ENCODE measurements at regions of chr2 and their contacts with region 1.

Region 1: GRCh38 chr2:206442833-206443734 is at the start of gene ADAM23:
- DNase-seq: peak; percentile 53 to 67
- ATAC-seq: peak; percentile 83 to 92 (median 88)
- H3K4me3 ChIP-seq: peak within 1 kb of the TSS; percentile 33 to 75 (median 66)
- H3K27ac ChIP-seq: peak within 1 kb of the TSS; percentile 53 to 91 (median 77)
- H3K4me1 ChIP-seq: peaks cover 3 to 46% (median 20%) of the 10 kb centered on the region in 9 donors
- H3K27me3 ChIP-seq: peaks cover 0 to 81% (median 30%) of the 10 kb centered on the region in 7 donors
- CTCF ChIP-seq: peak in 8 of 9 donors; percentile 16 to 52 (median 24)
- total RNA-seq, gene ADAM23: 51.0 to 101 (median 72.4) TPM

Region 2: DNA sequence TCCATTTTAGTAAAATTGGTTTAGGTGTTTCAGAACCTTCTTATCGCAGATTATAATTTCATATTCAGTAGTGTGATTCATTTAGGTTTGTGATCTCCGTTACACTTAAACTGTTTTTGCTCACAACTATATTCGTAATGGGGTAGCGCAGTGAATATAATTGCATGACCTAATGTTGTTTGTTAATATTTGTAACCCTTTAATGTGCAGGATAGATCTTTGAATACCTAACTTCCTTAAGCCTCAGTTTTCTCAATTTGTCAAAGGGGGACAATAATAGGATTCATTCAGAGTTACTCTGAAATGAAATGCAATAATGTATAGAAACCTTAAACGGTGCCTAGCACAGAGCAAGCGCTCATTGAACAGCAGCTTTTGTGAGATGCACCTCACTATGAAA is 169.2 kb before region 1 on chr2:
- intact Hi-C with region 1: no loop called
- DNase-seq: no peak
- ATAC-seq: no peak
- H3K4me3 ChIP-seq: peak overlapping the region in 9 of 10 donors; percentile 67 to 76 (median 70)
- H3K27ac ChIP-seq: peak overlapping the region in 5 of 10 donors; percentile 64 to 79 (median 77)
- H3K4me1 ChIP-seq: peaks cover 0 to 17% (median 5%) of the 10 kb centered on the region in 9 donors
- H3K27me3 ChIP-seq: peaks cover 0 to 100% (median 93%) of the 10 kb centered on the region in 7 donors
- CTCF ChIP-seq: no peak

Region 3: DNA sequence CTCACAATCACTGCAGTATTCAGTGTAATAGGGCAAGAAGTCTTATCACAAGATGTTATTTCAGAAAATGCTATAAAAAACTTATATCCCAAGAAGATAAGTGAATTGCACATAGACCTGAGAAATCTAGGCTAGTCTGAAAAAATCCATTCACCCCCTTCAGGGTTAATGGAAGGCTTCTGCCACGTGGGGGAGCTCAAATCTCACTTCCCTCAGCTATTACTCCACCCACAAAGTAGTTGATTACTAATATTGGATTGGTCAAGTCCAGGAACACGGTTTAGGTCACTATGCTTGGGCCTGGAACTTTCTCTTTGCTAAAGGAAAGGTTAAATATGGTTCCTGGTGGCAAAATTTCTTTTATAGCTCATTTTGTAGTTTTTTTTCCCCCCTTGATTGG is 51.0 kb before region 1 on chr2:
- intact Hi-C with region 1: loop called in 1 of 10 experiments (anchors 5 kb)
- DNase-seq: no peak
- ATAC-seq: peak in 3 of 8 donors; percentile 29 to 70 (median 39)
- H3K4me3 ChIP-seq: no peak overlapping the region
- H3K27ac ChIP-seq: no peak overlapping the region
- H3K4me1 ChIP-seq: no peaks in the 10 kb centered on the region
- H3K27me3 ChIP-seq: no peaks in the 10 kb centered on the region
- CTCF ChIP-seq: peak; percentile 25 to 61 (median 52)

Region 4: GRCh38 chr2:206543073-206543472 is 100.0 kb after region 1 on chr2:
- intact Hi-C with region 1: loop called in 1 of 10 experiments (anchors 10 kb)
- DNase-seq: no peak
- ATAC-seq: no peak
- H3K4me3 ChIP-seq: no peak overlapping the region
- H3K27ac ChIP-seq: no peak overlapping the region
- H3K4me1 ChIP-seq: no peaks in the 10 kb centered on the region
- H3K27me3 ChIP-seq: no peaks in the 10 kb centered on the region
- CTCF ChIP-seq: no peak

Region 5: DNA sequence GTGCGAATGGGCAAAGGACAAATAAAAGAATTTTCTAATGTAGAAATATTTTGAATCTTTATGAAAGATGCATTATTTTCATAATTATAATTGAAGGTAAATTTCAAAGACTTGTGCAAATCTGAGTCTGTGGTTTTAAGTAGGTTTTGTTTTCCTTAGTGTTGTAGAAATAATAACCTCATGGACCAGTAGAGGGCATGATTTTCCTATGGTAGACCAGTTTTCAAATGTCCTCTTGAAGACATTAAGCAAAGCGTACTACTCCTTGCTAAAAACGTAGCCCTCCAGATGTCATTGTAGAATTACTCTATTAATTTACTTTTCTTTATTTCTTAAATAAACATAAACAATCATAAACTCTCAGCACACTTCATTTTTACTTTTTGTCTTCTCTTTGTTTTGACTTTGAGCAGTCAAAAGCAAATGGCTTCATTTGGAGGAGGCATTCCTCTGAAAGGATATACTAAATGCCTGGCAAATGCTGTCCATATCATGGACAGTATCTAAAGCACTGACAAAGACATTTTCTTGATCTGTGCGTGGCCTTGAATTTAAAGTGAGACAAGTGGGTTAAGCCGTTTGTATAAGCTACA is 113.4 kb after region 1 on chr2:
- intact Hi-C with region 1: loop called in 2 of 10 experiments (anchors 10 kb)
- DNase-seq: no peak
- ATAC-seq: no peak
- H3K4me3 ChIP-seq: no peak overlapping the region
- H3K27ac ChIP-seq: no peak overlapping the region
- H3K4me1 ChIP-seq: peaks cover 0 to 5% (median 0%) of the 10 kb centered on the region in 9 donors
- H3K27me3 ChIP-seq: no peaks in the 10 kb centered on the region
- CTCF ChIP-seq: peak; percentile 13 to 67 (median 53)

Measured in heart right ventricle (tissue), 16 donors.